ENCODE measurements at regions of chr19 and their contacts with region 1.

Region 1: GRCh38 chr19:41308392-41309179 is 1.4 kb upstream of the CCDC97 start:
- DNase-seq: peak; percentile 96 to 97
- ATAC-seq: peak; percentile 62 to 88 (median 66)
- H3K4me3 ChIP-seq: no peak overlapping the region
- H3K4me3 Mint-ChIP-seq: peak overlapping the region; percentile 96
- H3K27ac ChIP-seq: peak overlapping the region; percentile 97
- H3K27ac Mint-ChIP-seq: peak overlapping the region; percentile 91 to 94
- H3K4me1 ChIP-seq: peaks cover 76% of the 10 kb centered on the region
- H3K4me1 Mint-ChIP-seq: peaks cover 84% of the 10 kb centered on the region in 2 donors
- H3K27me3 ChIP-seq: no peaks in the 10 kb centered on the region
- H3K27me3 Mint-ChIP-seq: no peaks in the 10 kb centered on the region
- CTCF ChIP-seq: peak; percentile 90

Region 2: DNA sequence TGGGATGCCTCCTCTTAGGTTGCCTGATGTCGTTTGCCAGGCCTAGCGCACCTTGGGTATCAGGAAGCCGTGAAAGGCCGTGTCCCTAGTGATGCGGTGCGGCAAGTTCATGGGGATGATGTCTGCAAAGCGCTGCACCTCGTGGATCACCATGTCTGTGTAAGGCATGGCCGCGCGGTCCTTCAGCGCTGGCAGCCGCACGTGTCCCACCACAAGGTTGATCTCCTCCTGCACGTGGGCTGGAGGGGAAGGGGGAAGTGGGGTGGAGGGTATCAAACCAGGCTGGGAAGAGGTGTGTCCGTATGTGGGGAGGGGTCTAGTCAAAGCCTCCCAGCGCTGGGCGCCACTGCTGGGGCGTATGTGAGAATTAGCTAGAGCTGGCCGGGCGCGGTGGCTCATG is 486.4 kb before region 1 on chr19:
- intact Hi-C with region 1: loop called (anchors 10 kb)
- DNase-seq: peak in 1 of 2 donors; percentile 7
- ATAC-seq: no peak
- H3K4me3 ChIP-seq: no peak overlapping the region
- H3K4me3 Mint-ChIP-seq: no peak overlapping the region
- H3K27ac ChIP-seq: no peak overlapping the region
- H3K27ac Mint-ChIP-seq: peak overlapping the region in 1 of 2 donors; percentile 92
- H3K4me1 ChIP-seq: peaks cover 69% of the 10 kb centered on the region
- H3K4me1 Mint-ChIP-seq: peaks cover 55 to 60% of the 10 kb centered on the region in 2 donors
- H3K27me3 ChIP-seq: no peaks in the 10 kb centered on the region
- H3K27me3 Mint-ChIP-seq: no peaks in the 10 kb centered on the region
- CTCF ChIP-seq: no peak

Region 3: GRCh38 chr19:41206926-41207750 is 101.4 kb before region 1 on chr19:
- intact Hi-C with region 1: loop called (anchors 1 kb)
- DNase-seq: no peak
- ATAC-seq: no peak
- H3K4me3 ChIP-seq: no peak overlapping the region
- H3K4me3 Mint-ChIP-seq: no peak overlapping the region
- H3K27ac ChIP-seq: no peak overlapping the region
- H3K27ac Mint-ChIP-seq: no peak overlapping the region
- H3K4me1 ChIP-seq: no peaks in the 10 kb centered on the region
- H3K4me1 Mint-ChIP-seq: peaks cover 4 to 10% of the 10 kb centered on the region in 2 donors
- H3K27me3 ChIP-seq: no peaks in the 10 kb centered on the region
- H3K27me3 Mint-ChIP-seq: no peaks in the 10 kb centered on the region
- CTCF ChIP-seq: no peak

Region 4: DNA sequence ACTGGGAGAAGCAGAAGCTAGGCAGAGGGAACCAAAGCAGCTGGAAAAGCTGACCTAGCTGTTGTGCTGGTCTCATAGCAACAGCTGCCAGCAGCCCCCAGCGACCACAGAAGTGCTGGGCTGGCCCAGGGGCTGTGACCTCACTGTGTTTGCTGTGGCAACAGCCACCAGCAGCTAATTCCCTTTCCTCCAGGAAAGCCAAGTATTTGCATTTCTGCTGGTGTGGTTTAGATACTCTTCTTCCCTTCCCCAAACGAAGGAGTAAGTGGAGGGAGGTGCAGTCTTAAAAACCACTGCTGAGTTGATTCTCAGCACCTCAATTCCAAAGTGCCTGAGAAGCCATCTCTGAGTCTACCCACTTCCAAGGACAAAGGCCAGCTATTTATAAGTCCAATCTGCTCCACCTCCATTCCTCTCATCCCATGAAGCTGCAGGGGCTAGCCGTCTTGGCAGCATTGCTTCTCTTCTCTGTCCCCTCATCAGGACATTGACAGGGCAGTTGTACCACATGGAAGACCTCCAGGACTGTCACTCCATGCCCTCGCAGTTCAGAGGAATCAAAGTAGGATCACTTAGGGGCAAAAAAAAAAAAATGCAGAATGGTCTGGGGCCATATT is 10.1 kb before region 1 on chr19:
- intact Hi-C with region 1: loop called (anchors 1 kb)
- DNase-seq: peak; percentile 62 to 77
- ATAC-seq: peak; percentile 24 to 43 (median 33)
- H3K4me3 ChIP-seq: no peak overlapping the region
- H3K4me3 Mint-ChIP-seq: peak overlapping the region; percentile 65
- H3K27ac ChIP-seq: peak overlapping the region; percentile 87
- H3K27ac Mint-ChIP-seq: peak overlapping the region; percentile 91 to 94
- H3K4me1 ChIP-seq: peaks cover 71% of the 10 kb centered on the region
- H3K4me1 Mint-ChIP-seq: peaks cover 76 to 85% of the 10 kb centered on the region in 2 donors
- H3K27me3 ChIP-seq: no peaks in the 10 kb centered on the region
- H3K27me3 Mint-ChIP-seq: no peaks in the 10 kb centered on the region
- CTCF ChIP-seq: no peak

Region 5: GRCh38 chr19:41353466-41354342 is 45.1 kb after region 1 on chr19 and contains the start of gene TGFB1:
- intact Hi-C with region 1: loop called (anchors 5 kb)
- DNase-seq: peak; percentile 92 to 97
- ATAC-seq: peak; percentile 64 to 88 (median 68)
- H3K4me3 ChIP-seq: peak within 1 kb of the TSS; percentile 90
- H3K4me3 Mint-ChIP-seq: peak within 1 kb of the TSS; percentile 93
- H3K27ac ChIP-seq: peak within 1 kb of the TSS; percentile 90
- H3K27ac Mint-ChIP-seq: peak within 1 kb of the TSS; percentile 90 to 96
- H3K4me1 ChIP-seq: peaks cover 66% of the 10 kb centered on the region
- H3K4me1 Mint-ChIP-seq: peaks cover 56 to 76% of the 10 kb centered on the region in 2 donors
- H3K27me3 ChIP-seq: no peaks in the 10 kb centered on the region
- H3K27me3 Mint-ChIP-seq: peaks cover 0 to 2% of the 10 kb centered on the region in 2 donors
- CTCF ChIP-seq: peak; percentile 84
- total RNA-seq, gene TGFB1: 682 to 761 (median 729) TPM

Region 6: DNA sequence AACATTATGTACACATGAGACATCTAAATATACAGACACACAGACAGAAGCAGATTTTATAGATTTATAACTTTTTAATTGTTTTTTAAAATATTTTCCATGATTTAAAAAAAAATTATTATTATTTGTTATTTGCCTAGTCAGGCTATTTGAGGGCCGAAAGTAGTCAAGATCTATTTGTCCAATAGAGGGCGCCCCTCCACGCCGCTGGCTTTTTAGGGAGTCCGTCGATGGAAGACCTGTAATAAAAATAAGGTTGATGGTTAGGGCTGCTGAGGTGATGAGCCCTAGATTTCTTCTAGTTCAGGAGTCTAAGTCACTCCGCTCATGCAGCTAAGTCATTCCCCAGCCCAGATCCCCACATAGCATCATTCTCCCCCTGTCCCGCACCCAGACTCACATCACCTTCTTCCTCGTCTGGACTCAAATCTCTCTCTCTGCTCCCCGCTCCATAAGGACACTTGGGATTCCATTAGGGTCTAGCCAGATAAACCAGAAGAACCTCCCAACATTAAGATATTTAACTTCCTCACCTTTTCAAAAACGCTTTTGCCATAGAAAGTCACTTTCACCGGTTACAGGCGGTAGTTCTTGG is 233.5 kb after region 1 on chr19:
- intact Hi-C with region 1: no loop called
- DNase-seq: peak; percentile 74 to 88
- ATAC-seq: peak; percentile 32 to 57 (median 57)
- H3K4me3 ChIP-seq: no peak overlapping the region
- H3K4me3 Mint-ChIP-seq: peak overlapping the region; percentile 65
- H3K27ac ChIP-seq: no peak overlapping the region
- H3K27ac Mint-ChIP-seq: peak overlapping the region in 1 of 2 donors; percentile 1
- H3K4me1 ChIP-seq: peaks cover 33% of the 10 kb centered on the region
- H3K4me1 Mint-ChIP-seq: peaks cover 40 to 41% of the 10 kb centered on the region in 2 donors
- H3K27me3 ChIP-seq: no peaks in the 10 kb centered on the region
- H3K27me3 Mint-ChIP-seq: no peaks in the 10 kb centered on the region
- CTCF ChIP-seq: peak; percentile 92